ENCODE measurements at regions of chr7 and their contacts with region 1.

Region 1: DNA sequence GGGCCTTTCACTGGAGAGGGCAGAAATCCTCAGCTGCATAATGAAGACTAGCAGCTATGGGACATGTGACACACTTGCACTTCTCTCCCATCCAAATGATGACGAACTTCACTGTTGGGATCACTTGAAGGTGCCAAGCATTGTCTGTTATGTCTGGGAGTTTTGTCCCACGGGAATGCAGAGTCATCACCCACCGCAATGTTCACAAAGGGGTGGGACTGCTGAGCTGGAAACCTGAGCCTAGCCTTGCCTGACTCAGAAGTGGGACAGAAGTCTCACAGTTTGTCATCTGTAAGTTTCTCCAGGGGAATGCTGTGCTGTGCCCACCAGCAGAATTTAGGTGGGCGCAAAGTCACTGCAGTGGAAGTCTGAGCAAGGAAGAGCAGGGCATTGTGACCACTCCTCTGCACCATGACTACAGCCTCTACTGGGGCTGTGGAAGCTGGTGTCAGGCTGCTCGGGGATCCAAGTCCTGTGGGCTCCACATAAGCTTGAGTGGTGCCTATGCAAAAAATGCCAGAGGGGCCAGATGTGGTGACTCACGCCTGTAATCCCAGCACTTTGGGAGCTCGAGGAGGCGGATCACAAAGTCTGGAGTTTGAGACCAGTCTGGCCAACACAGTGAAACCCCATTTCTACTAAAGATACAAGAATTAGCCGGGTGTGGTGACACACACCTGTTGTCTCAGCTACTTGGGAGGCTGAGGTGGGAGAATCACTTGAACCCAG is 472.0 kb upstream of the CNTNAP2 start:
- DNase-seq: peak; percentile 95
- ATAC-seq: peak; percentile 95
- H3K4me3 ChIP-seq: peak overlapping the region; percentile 53; the same call in 1 of the 2 replicates
- H3K27ac ChIP-seq: peak overlapping the region; percentile 100
- H3K4me1 ChIP-seq: peaks cover 24% of the 10 kb centered on the region
- H3K27me3 ChIP-seq: no peaks in the 10 kb centered on the region
- CTCF ChIP-seq: no peak

Region 2: DNA sequence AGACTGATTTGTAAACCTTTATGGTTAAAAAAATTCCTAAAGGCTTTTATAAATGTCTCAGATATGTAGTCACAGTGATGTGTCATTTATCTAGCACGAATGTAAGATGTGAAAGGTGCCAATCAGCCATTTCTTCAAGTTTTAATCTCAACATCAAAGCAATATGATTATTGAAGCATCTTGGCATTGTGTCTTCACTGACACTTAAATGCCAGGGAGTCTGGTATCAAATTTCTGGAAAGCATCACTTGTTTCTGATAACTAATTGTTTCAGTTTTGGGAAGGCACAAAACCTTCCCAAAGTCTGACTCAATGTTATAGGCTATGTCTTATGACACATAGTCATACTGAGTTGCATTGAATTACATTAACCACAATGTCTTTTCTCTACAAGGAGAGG is 20.0 kb before region 1 on chr7:
- CTCF ChIA-PET with region 1: no interaction called
- POLR2A ChIA-PET with region 1: no interaction called
- intact Hi-C with region 1: loop called (anchors 1 kb)
- DNase-seq: peak; percentile 84
- ATAC-seq: peak; percentile 93
- H3K4me3 ChIP-seq: peak overlapping the region; percentile 44; the same call in 1 of the 2 replicates
- H3K27ac ChIP-seq: peak overlapping the region; percentile 99
- H3K4me1 ChIP-seq: peaks cover 27% of the 10 kb centered on the region
- H3K27me3 ChIP-seq: no peaks in the 10 kb centered on the region
- CTCF ChIP-seq: no peak

Region 3: GRCh38 chr7:145700488-145700887 is 55.9 kb after region 1 on chr7:
- CTCF ChIA-PET with region 1: no interaction called
- POLR2A ChIA-PET with region 1: no interaction called
- intact Hi-C with region 1: no loop called
- DNase-seq: no peak
- ATAC-seq: no peak
- H3K4me3 ChIP-seq: no peak overlapping the region
- H3K27ac ChIP-seq: no peak overlapping the region
- H3K4me1 ChIP-seq: no peaks in the 10 kb centered on the region
- H3K27me3 ChIP-seq: peaks cover 13% of the 10 kb centered on the region; the same call in 1 of the 2 replicates
- CTCF ChIP-seq: no peak

Region 4: DNA sequence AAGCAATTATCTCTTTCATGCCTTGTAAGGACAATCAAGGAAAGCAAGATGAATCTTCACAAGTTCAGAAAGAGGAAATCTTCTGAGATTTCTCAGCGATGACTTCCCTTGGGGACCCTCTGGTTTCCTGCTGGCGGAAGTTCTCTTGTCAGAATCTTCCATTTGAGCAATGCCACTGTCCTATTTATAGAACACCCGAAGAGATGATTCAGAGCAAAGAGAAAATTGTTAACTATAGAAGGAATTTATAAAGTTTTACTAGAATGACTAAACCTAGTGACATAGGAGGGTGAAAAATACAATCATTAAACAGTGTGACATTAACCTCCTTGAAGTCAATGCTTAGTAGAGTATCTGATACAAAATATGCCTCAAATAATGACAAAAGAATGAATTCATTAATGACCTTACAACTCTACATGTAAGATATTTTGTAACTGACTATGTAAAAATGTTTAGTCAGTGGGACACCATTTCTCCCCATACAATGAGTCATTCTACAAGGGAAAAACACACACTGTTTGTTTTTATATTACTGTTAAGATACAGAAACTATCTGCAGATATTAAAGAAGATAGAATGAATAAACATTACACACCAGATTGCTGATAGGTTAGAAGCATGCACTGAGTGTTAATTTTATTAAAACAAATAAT is 265.5 kb after region 1 on chr7:
- CTCF ChIA-PET with region 1: no interaction called
- POLR2A ChIA-PET with region 1: no interaction called
- intact Hi-C with region 1: loop called (anchors 5 kb)
- DNase-seq: peak; percentile 20
- ATAC-seq: peak; percentile 71
- H3K4me3 ChIP-seq: no peak overlapping the region
- H3K27ac ChIP-seq: peak overlapping the region; percentile 77
- H3K4me1 ChIP-seq: no peaks in the 10 kb centered on the region
- H3K27me3 ChIP-seq: no peaks in the 10 kb centered on the region
- CTCF ChIP-seq: no peak